B cell (primary cell): ENCODE measurements at regions of chr7 and their contacts with region 1.

Region 1: DNA sequence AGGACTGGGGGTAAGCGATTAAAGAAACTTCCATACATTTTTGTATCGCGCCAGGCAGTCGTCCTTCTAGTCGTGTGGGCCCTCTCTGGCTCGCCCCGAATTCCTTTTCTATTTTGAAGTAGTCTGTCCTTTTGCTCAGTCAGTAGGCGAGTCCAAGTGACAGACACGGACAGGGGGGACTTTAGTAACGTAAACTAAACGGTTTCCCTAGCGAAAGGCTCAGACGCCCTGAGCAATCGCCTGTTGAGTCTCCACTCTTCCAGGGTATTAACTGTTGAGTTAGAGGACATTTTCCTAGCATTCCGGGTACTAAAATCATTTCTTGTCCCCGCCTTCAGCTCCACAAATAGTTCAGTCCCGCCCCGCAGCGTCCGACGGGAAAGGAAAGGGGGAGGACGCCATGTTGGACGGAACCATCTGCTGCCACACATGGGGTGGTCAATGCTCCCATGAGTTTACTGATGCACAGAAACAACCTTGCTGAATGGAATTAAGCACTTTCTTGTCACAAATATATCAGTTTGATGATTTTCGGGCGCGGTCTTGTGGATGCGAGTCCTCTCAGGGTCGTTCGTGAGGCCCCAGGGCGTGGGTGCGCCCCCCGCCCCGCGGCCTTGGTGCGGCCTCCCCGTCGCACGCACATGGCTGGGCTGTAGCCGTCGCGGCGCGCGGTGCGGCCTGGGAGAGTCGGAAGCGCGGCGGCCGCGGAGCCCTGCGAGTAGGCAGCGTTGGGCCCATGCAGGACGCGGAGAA is at the start of gene EIF3B:
- DNase-seq: peak; percentile 99
- ATAC-seq: peak; percentile 83
- H3K4me3 ChIP-seq: peak within 1 kb of the TSS; percentile 72 to 97 (median 89)
- H3K4me3 Mint-ChIP-seq: peak within 1 kb of the TSS; percentile 94
- H3K27ac ChIP-seq: peak within 1 kb of the TSS; percentile 98 to 100
- H3K27ac Mint-ChIP-seq: peak within 1 kb of the TSS; percentile 100
- H3K4me1 ChIP-seq: peaks cover 21 to 27% of the 10 kb centered on the region in 2 donors
- H3K4me1 Mint-ChIP-seq: peaks cover 29% of the 10 kb centered on the region
- H3K27me3 ChIP-seq: no peaks in the 10 kb centered on the region
- H3K27me3 Mint-ChIP-seq: no peaks in the 10 kb centered on the region
- CTCF ChIP-seq: no peak
- total RNA-seq, gene EIF3B: 146 and 152 TPM in 2 replicates

Region 2: DNA sequence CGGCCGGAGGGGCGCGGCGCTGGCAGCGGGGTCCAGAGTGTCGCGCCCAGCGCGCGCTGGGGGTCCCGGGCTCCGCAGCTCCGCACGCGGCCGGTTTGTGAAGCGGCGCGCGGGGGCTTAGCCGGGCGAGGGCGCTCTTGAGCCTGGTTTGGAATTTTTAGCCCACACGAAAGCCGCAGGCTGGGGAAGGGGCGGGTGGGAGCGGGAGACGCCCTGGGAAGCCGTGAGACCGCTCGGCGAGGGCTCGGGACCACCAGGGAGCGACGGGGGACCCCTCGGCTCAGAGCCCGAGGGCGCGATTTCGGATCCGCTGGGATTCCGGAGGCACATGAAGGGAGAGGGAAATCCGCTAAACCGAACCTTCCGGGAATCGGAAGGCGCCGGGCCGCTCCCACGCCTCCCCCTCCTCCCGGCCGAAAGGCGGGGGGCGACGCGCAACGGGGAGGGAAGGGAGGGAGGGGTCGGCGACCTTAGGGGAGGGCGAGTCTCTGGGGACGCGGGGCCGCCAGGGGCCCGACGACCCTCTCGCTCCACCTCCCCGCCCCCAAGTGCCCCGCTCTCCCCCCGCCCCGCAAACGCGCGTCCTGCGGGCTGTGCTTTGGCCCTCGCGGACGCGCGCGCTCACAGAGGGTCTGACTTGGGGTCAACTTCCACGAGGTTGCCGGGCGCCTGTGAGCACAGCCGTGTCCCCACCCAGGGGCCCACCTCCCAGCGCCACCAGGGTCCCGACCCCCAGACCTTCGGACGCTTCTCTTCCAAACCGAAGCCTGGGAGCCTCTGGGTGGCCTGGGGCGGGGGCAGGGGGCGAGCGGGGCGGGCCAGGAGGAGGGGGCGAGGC is 689.4 kb before region 1 on chr7:
- CTCF ChIA-PET with region 1: no interaction called
- POLR2A ChIA-PET with region 1: no interaction called
- intact Hi-C with region 1: loop called (anchors 10 kb)
- DNase-seq: peak; percentile 67
- ATAC-seq: peak; percentile 50
- H3K4me3 ChIP-seq: peak overlapping the region; percentile 29 to 56 (median 48)
- H3K4me3 Mint-ChIP-seq: peak overlapping the region; percentile 34
- H3K27ac ChIP-seq: no peak overlapping the region
- H3K27ac Mint-ChIP-seq: no peak overlapping the region
- H3K4me1 ChIP-seq: peaks cover 45% of the 10 kb centered on the region in 2 donors
- H3K4me1 Mint-ChIP-seq: peaks cover 19% of the 10 kb centered on the region
- H3K27me3 ChIP-seq: peaks cover 0 to 62% (median 30%) of the 10 kb centered on the region in 4 experiments
- H3K27me3 Mint-ChIP-seq: peaks cover 45% of the 10 kb centered on the region
- CTCF ChIP-seq: peak; percentile 70

Region 3: GRCh38 chr7:2104107-2104710 is 250.2 kb before region 1 on chr7:
- CTCF ChIA-PET with region 1: interaction called, 40 read pairs
- POLR2A ChIA-PET with region 1: no interaction called
- intact Hi-C with region 1: no loop called
- DNase-seq: peak; percentile 86
- ATAC-seq: peak; percentile 56
- H3K4me3 ChIP-seq: peak overlapping the region in 3 of 5 experiments; percentile 2 to 40 (median 20)
- H3K4me3 Mint-ChIP-seq: peak overlapping the region; percentile 61
- H3K27ac ChIP-seq: no peak overlapping the region
- H3K27ac Mint-ChIP-seq: peak overlapping the region; percentile 56
- H3K4me1 ChIP-seq: peaks cover 25 to 36% of the 10 kb centered on the region in 2 donors
- H3K4me1 Mint-ChIP-seq: peaks cover 43% of the 10 kb centered on the region
- H3K27me3 ChIP-seq: no peaks in the 10 kb centered on the region
- H3K27me3 Mint-ChIP-seq: no peaks in the 10 kb centered on the region
- CTCF ChIP-seq: peak; percentile 66

Region 4: DNA sequence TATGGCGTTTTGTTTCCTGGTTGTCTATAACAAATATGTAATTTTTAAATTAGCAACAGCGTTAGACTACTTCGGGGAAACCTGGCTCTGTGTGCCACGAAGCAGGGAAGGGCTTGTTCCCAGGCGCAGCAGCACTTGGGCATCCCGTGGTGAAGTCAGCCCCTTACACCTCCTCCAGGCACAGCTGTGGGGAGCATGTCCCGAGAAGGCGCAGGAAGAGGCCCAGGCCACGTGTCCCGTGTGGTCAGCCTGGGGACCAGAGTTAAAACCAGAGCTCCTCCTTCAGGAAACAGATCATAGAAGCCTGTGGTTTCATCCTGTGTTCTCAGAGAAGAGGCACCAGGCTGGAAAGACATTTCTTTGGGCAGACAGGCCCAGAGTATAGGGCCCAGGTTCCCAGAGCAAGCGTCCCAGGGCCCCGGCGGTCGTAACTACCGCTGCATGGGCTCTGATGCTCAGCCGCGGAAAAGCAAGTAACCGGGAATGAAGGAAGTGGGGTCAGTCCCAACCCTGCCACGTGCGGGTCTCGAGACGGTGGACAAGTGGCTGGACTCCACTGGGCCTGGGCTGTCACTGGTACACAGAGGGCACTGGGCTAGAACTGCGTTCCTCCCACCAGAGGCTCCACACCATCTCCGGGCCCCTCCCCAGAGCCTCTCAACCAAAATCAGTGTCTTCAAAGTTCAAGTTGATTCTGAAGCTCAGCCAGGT is 105.2 kb before region 1 on chr7:
- CTCF ChIA-PET with region 1: interaction called, 36 read pairs
- POLR2A ChIA-PET with region 1: no interaction called
- intact Hi-C with region 1: no loop called
- DNase-seq: peak; percentile 49
- ATAC-seq: peak; percentile 7
- H3K4me3 ChIP-seq: no peak overlapping the region
- H3K4me3 Mint-ChIP-seq: no peak overlapping the region
- H3K27ac ChIP-seq: peak overlapping the region in 1 of 2 donors; percentile 33
- H3K27ac Mint-ChIP-seq: peak overlapping the region; percentile 75
- H3K4me1 ChIP-seq: peaks cover 26 to 55% of the 10 kb centered on the region in 2 donors
- H3K4me1 Mint-ChIP-seq: peaks cover 49% of the 10 kb centered on the region
- H3K27me3 ChIP-seq: no peaks in the 10 kb centered on the region
- H3K27me3 Mint-ChIP-seq: no peaks in the 10 kb centered on the region
- CTCF ChIP-seq: no peak

Region 5: DNA sequence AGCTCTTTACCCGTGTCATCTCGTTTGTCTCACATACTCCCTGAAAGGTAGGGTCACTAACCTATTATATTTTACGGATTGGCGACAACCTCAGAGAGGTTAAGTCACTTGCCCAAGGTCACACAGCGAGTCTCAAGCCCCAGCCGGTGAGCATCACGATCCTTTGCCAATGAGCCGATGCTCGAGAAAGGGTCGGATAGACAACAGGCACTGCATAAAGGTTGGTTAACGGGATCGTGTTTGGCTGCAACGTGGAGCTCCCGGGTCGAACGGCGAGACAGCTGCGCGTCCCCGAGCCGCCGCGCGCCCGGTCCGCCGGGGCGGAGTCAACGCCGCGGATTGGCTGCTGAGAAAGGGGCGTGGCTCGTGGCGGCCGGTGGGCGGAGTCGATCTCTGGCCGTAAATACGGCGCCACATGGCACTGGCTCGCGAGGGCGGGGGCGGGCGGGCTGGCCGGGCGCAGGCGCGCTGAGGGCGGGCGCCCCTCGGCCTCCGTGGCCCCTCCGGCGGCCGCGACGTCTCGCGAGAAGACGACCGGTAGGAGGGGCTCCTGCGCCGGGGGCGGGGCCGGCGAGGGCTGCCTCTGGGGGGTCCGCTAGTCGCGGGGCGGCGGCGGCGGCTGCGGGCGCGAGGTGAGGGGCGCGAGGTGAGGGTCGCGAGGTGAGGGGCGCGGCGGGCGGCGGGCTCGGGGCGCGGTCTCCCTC is 48.8 kb after region 1 on chr7 and contains the start of gene CHST12:
- CTCF ChIA-PET with region 1: no interaction called
- POLR2A ChIA-PET with region 1: interaction called, 3 read pairs
- intact Hi-C with region 1: loop called (anchors 1 kb)
- DNase-seq: peak; percentile 98
- ATAC-seq: peak; percentile 78
- H3K4me3 ChIP-seq: peak within 1 kb of the TSS; percentile 50 to 83 (median 77)
- H3K4me3 Mint-ChIP-seq: peak within 1 kb of the TSS; percentile 88
- H3K27ac ChIP-seq: peak within 1 kb of the TSS; percentile 27 to 72
- H3K27ac Mint-ChIP-seq: peak within 1 kb of the TSS; percentile 86
- H3K4me1 ChIP-seq: peaks cover 33 to 55% of the 10 kb centered on the region in 2 donors
- H3K4me1 Mint-ChIP-seq: peaks cover 46% of the 10 kb centered on the region
- H3K27me3 ChIP-seq: no peaks in the 10 kb centered on the region
- H3K27me3 Mint-ChIP-seq: no peaks in the 10 kb centered on the region
- CTCF ChIP-seq: no peak
- total RNA-seq, gene CHST12: 25.4 TPM in 2 replicates